ENCODE measurements at regions of chr9 and their contacts with region 1.

Region 1: DNA sequence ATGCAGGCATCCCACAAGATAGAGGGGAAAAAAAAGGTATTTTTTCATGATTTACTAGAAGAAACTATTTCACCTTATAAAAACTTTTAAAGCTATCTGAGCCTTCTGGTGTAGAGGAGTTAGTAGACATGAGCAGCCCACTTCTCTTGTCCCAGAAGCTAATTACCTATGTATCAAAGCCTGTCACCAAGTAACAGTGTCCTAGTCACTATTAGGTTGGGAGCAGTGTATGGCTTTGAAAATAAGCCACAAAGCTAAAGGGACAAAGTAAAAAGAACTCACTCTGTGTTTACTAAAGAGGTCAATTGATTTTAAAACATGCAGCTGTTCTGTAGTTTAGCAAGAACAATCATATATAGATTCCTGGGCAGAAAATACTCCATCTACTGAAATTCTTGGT is 1286.1 kb downstream of the PTPRD start:
- DNase-seq: no peak
- ATAC-seq: no peak
- H3K4me3 ChIP-seq: no peak overlapping the region
- H3K27ac ChIP-seq: no peak overlapping the region
- H3K4me1 ChIP-seq: no peaks in the 10 kb centered on the region
- H3K27me3 ChIP-seq: no peaks in the 10 kb centered on the region
- CTCF ChIP-seq: no peak
- POLR2A ChIP-seq: no peak

Region 2: GRCh38 chr9:9257999-9258498 is 68.7 kb before region 1 on chr9:
- intact Hi-C with region 1: loop called in 1 of 10 experiments (anchors 10 kb)
- DNase-seq: no peak
- ATAC-seq: no peak
- H3K4me3 ChIP-seq: no peak overlapping the region
- H3K27ac ChIP-seq: no peak overlapping the region
- H3K4me1 ChIP-seq: no peaks in the 10 kb centered on the region
- H3K27me3 ChIP-seq: no peaks in the 10 kb centered on the region
- CTCF ChIP-seq: no peak
- POLR2A ChIP-seq: no peak

Region 3: DNA sequence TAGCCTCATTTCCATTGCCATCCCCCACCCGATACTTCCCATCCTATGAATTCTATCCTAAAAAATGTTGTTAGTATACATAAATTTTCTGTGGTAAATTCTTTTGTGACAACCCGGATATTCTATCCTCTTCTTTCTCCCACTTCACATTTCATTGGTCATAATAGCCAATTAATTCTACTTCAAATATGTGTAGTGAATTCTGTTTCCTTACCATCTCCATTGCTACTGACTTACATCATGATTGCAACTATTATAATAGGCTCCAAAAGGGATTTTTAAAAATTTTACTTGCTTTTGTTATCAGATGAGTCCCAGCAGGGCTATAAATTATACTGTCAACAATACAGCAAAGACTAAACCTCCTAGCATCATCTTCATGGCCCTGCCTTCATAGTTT is 40.7 kb before region 1 on chr9:
- intact Hi-C with region 1: no loop called
- DNase-seq: no peak
- ATAC-seq: no peak
- H3K4me3 ChIP-seq: no peak overlapping the region
- H3K27ac ChIP-seq: no peak overlapping the region
- H3K4me1 ChIP-seq: no peaks in the 10 kb centered on the region
- H3K27me3 ChIP-seq: no peaks in the 10 kb centered on the region
- CTCF ChIP-seq: no peak
- POLR2A ChIP-seq: no peak